IMR-90 (cell line): ENCODE measurements at regions of chr3 and their contacts with region 1.

Region 1: GRCh38 chr3:10738688-10739372 is 77.2 kb upstream of the SLC6A11 start:
- DNase-seq: peak; percentile 58
- ATAC-seq: peak; percentile 99
- H3K4me3 ChIP-seq: 0 out of 2 replicates have a peak overlapping the region, but pooled peaks have one; percentile 20
- H3K27ac ChIP-seq: no peak overlapping the region
- H3K4me1 ChIP-seq: no peaks in the 10 kb centered on the region
- H3K27me3 ChIP-seq: peaks cover 3% of the 10 kb centered on the region
- CTCF ChIP-seq: peak; percentile 75
- POLR2A ChIP-seq: no peak
- RAD21 ChIP-seq: peak; percentile 76

Region 2: DNA sequence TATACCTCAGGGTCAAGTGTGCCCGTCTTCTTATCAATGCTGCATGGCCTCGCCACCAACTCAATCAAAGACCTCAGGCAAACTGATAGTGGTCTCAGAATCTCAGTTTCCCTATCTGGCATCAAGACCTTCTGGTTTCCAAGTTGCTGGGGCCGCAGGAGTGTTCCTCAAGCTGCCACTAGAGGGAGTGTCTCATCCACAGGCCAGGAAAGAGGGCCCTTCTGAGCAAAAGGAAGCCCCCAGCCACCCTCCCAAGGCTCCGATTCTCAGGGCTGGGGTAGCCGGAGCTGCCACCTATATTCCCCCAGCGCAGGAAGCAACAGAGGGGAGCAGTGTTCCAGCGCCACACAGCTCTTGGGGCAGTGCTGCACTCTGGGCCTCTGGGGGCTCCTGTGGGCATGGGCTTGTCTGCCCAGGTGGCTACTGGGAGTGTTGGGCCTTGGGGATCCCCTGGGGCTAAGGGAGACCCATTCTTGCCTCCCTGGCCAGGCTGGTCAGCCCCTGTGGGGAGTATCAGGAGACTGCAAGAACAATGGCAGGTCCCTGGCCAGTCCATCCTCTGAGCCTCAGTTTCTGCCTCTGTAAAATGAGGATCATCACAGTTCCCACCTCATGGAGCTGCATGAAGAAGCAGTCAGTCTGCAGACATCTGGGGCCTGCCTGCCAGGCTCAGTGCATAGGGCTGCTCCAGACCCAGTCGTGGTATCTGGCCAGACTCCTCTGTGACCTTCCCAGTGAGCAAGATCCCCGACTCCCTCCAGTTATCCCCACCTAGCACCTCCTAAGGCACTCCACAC is 394.5 kb before region 1 on chr3:
- CTCF ChIA-PET with region 1: interaction called, 4 read pairs
- POLR2A ChIA-PET with region 1: no interaction called
- dilution Hi-C with region 1: no loop called
- in situ Hi-C with region 1: loop called (anchors 5 kb)
- intact Hi-C with region 1: loop called (anchors 1 kb)
- DNase-seq: peak; percentile 54
- ATAC-seq: peak; percentile 84
- H3K4me3 ChIP-seq: no peak overlapping the region
- H3K27ac ChIP-seq: no peak overlapping the region
- H3K4me1 ChIP-seq: no peaks in the 10 kb centered on the region
- H3K27me3 ChIP-seq: peaks cover 19% of the 10 kb centered on the region; the same call in 1 of the 2 replicates
- CTCF ChIP-seq: peak; percentile 87
- POLR2A ChIP-seq: no peak
- RAD21 ChIP-seq: peak; percentile 92

Region 3: DNA sequence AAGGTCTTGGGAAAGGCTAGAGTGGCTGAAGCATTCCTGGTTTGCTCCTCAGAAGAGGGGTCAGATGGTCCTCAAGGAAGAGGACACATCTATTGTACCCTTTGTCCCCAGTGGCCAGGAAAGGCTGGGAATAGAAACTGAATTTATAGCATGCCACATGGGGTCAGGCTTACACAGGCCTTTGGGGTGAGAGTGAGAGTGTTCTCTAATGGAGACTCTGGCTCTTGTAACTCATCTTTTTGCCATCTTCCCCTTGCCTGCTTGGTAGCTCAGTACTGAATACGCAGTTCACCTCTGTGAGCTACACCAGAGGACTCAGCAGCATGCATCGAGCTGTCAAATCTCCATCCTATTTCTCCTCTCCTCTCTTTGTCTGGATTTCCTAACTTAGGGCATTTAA is 321.0 kb before region 1 on chr3:
- CTCF ChIA-PET with region 1: interaction called, 7 read pairs
- POLR2A ChIA-PET with region 1: no interaction called
- dilution Hi-C with region 1: no loop called
- in situ Hi-C with region 1: loop called (anchors 5 kb)
- intact Hi-C with region 1: loop called (anchors 1 kb)
- DNase-seq: peak; percentile 23
- ATAC-seq: no peak; the same call in 1 of the 2 replicates
- H3K4me3 ChIP-seq: no peak overlapping the region
- H3K27ac ChIP-seq: no peak overlapping the region
- H3K4me1 ChIP-seq: no peaks in the 10 kb centered on the region
- H3K27me3 ChIP-seq: peaks cover 58% of the 10 kb centered on the region
- CTCF ChIP-seq: peak; percentile 45
- POLR2A ChIP-seq: no peak
- RAD21 ChIP-seq: peak; percentile 72

Region 4: DNA sequence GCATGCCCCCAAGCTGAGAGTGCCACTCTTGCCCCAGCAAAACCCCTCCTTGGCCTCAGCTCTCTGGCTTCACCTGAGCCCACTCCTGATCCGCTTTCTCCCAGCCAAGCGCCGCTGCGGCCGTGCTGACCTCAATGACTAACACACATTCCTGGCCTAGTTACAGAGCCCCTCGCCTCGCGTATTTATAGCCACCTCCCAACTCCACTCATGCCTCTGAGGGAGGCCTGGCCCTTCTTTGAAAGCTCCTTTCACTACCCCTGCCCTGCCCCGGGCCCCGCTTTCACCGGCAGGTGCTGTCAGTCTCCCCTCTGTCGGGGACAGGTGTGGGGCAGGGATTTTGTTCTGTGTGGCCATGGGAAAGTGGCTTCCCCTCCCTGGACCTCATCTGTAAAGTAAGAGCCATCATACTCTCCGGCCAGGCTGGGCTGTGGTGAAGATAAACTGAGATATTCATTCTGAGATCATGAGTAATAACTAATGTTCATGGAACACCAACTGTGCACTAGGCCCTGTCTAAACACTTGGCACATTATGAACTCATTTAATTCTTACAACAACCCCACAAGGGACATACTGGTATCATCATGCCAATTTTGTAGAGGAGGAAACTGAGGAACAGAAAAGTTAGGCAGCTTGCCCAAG is 220.2 kb before region 1 on chr3:
- CTCF ChIA-PET with region 1: no interaction called
- POLR2A ChIA-PET with region 1: no interaction called
- dilution Hi-C with region 1: no loop called
- in situ Hi-C with region 1: no loop called
- intact Hi-C with region 1: no loop called
- DNase-seq: peak; percentile 58
- ATAC-seq: peak; percentile 62
- H3K4me3 ChIP-seq: no peak overlapping the region
- H3K27ac ChIP-seq: no peak overlapping the region
- H3K4me1 ChIP-seq: peaks cover 6% of the 10 kb centered on the region; the same call in 1 of the 2 replicates
- H3K27me3 ChIP-seq: peaks cover 30% of the 10 kb centered on the region
- CTCF ChIP-seq: no peak
- POLR2A ChIP-seq: no peak
- RAD21 ChIP-seq: no peak